Esophagus muscularis mucosa (tissue), 4 donors: ENCODE measurements at regions of chr13 and their contacts with region 1.

Region 1: DNA sequence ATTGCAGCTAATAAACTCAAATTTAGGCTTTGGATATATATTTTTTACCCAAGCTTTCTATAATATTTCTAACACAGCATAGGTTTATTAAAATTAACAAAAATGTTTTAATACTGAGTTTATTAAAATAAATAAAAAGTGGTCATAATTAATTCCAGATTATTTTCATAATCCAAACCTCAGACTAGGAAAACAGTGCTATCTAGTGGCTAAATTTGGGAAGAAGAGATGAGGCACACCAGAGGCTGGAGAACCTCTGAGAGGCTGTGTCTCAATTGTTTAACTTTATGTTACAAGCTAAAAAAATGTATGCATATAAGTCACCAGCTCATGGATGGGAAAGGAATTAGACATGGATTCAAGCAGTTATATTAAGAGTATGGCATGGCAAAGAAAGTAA is 392.5 kb downstream of the DIAPH3 start:
- DNase-seq: no peak
- H3K4me3 ChIP-seq: no peak overlapping the region
- H3K27ac ChIP-seq: no peak overlapping the region
- H3K4me1 ChIP-seq: peaks cover 0 to 37% (median 29%) of the 10 kb centered on the region in 4 donors
- H3K27me3 ChIP-seq: no peaks in the 10 kb centered on the region
- CTCF ChIP-seq: peak; percentile 47 to 61 (median 55)
- EP300 ChIP-seq: no peak
- POLR2A ChIP-seq: no peak

Region 2: DNA sequence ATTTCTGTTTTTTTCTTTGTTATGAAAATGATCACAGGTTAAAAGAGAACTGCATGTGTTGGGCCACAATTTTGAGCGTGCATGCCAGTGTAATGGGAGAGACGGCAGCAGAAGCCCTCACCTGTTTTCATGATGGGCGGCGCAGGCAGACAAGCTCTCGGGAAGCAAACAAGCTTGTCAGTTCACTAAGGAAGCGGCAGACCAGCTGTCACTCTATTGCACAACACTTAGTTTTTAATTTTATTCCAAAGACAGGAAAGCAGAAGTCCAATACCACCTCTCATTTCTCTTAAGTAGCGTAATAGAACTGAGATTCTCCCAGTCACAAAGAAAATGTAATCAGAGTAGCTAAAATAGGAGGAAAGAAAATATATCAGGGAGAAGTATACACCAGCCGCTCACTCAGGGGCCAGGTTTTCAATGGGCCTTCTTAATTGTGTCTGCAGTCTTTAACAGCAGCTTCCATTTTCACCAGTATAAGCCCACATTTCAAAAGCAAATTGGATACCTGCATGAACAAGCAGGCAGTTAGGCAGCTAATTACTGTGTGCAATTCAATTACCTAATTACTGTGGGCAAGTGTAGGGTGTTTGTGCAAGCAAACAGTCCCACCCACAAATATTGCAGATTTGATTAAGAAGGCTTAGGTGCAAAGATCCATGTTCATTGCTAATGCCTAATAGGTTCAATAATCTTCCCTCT is 318.9 kb before region 1 on chr13:
- intact Hi-C with region 1: no loop called
- DNase-seq: no peak
- H3K4me3 ChIP-seq: no peak overlapping the region
- H3K27ac ChIP-seq: no peak overlapping the region
- H3K4me1 ChIP-seq: no peaks in the 10 kb centered on the region
- H3K27me3 ChIP-seq: no peaks in the 10 kb centered on the region
- CTCF ChIP-seq: no peak
- EP300 ChIP-seq: no peak
- POLR2A ChIP-seq: no peak

Region 3: GRCh38 chr13:59677966-59678814 is 93.1 kb before region 1 on chr13:
- intact Hi-C with region 1: loop called (anchors 5 kb)
- DNase-seq: no peak
- H3K4me3 ChIP-seq: no peak overlapping the region
- H3K27ac ChIP-seq: no peak overlapping the region
- H3K4me1 ChIP-seq: peaks cover 6 to 18% (median 9%) of the 10 kb centered on the region in 4 donors
- H3K27me3 ChIP-seq: no peaks in the 10 kb centered on the region
- CTCF ChIP-seq: peak; percentile 68 to 88 (median 76)
- EP300 ChIP-seq: no peak
- POLR2A ChIP-seq: no peak